ENCODE measurements at regions of chr1 and their contacts with region 1.

Region 1: GRCh38 chr1:211323156-211324063 is 3.2 kb upstream of the TRAF5 start:
- DNase-seq: peak; percentile 67
- CTCF ChIP-seq: peak; percentile 84

Region 2: GRCh38 chr1:211309617-211310016 is 13.8 kb before region 1 on chr1:
- CTCF ChIA-PET with region 1: interaction called, 43 read pairs
- POLR2A ChIA-PET with region 1: no interaction called
- DNase-seq: no peak
- CTCF ChIP-seq: no peak

Region 3: DNA sequence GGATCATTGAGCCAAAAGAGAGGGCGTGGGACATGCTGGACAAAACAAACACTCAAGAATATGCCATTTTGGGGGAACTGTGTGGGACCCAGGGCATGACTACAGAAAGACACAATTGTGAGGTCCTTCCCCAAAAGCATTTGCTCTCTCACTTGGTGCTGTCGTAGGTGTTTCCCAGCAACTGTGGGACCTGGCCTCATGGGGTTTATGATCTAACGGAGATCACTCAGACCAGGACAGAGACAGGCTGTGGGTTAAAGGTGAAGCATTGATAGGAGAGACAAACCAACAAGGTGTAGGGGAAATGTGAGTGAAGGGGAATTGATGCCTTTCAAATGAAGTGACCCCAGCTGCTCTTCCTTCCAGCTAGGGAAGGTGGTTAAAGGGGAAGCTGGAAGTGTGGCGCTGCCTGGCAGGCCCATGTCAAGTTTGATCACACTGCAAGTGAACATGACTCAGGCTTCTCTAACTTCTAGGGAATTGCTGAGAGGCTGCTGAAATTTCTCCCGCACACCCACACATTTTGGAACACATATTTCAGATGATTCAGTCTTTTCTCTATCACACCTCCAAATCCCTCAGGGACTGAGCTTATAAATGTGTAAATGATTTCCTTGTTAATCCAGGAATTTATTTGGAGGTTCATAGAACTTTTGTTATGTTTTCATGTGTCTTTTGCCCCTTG is 33.5 kb after region 1 on chr1:
- CTCF ChIA-PET with region 1: interaction called, 18 read pairs
- POLR2A ChIA-PET with region 1: no interaction called
- DNase-seq: no peak
- CTCF ChIP-seq: no peak

Region 4: GRCh38 chr1:211476200-211476849 is 152.9 kb after region 1 on chr1:
- CTCF ChIA-PET with region 1: interaction called, 23 read pairs
- POLR2A ChIA-PET with region 1: no interaction called
- DNase-seq: peak; percentile 75
- CTCF ChIP-seq: peak; percentile 83